ENCODE measurements at regions of chr3 and their contacts with region 1.

Region 1: DNA sequence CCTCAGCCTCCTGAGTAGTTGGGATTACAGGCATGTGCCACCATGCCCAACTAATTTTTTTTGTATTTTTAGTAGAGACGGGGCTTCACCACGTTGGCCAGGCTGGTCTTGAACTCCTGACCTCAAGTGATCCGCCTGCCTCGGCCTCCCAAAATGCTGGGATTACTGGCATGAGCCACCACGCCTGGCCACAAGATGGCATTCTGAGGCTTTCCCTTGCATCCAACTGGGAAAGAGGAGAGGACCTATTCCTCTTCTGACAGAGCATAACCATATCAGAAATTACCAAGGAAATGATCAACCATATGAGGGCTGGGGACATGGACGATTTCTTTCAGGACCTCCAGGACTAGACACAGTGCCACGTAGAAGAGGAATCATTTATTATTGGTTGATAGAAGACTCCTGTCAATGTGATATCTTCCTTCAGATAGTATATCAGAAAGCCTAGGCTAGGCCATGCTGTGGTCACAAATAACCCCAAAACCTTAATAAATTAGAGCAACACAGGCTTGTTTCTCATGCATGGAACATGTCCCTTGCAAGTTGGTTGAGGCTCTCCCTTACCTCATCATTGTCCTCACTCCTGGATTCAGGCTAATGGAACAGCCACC is 372.3 kb upstream of the IL12A start:
- DNase-seq: peak; percentile 68
- ATAC-seq: peak; percentile 70
- H3K4me3 ChIP-seq: no peak overlapping the region
- H3K27ac ChIP-seq: no peak overlapping the region
- H3K4me1 ChIP-seq: peaks cover 14% of the 10 kb centered on the region
- H3K27me3 ChIP-seq: no peaks in the 10 kb centered on the region
- CTCF ChIP-seq: peak; percentile 67
- POLR2A ChIP-seq: no peak
- RAD21 ChIP-seq: peak; percentile 82

Region 2: DNA sequence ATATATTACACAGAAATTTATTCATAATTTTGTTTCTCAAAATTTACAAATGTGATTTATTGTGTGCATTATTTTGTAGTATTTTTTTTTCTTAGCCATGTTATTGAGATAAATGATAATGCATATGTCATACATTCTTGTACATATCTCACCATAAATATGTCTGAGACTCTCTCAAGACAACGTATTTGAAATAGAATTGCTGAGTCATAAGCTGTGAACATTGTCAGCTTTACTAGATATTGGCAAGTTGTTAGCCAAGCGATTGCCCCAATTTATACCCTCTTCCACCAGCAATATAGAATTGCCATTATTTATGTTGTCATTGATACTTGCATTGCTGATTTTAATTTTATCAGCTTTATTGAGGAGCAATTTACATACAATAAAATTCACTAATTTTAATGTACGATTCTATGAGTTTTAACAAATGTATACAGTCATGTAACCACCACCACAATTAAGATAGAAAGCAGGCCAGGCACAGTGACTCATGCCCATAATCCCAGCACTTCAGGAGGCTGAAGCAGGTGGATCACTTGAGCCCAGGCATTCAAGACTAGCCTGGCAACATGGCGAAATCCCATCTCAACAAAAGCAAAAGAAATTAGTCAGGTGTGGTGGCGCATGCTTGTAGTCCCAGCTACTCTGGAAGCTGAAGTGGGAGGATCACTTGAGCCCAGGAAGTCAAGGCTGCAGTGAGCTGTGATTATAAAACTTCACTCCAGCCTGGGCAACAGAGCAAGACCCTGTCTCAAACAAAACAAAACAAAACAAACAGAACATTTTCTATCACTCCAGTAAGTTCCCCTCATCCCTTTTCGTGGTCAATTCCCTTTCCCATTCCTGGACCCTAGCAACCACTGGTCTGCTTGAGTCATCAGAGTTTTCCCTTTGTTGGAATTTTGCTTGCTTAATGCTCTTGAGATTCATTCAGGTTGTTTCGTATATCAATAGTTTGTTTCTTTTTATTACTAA is 441.3 kb before region 1 on chr3:
- CTCF ChIA-PET with region 1: no interaction called
- POLR2A ChIA-PET with region 1: no interaction called
- dilution Hi-C with region 1: no loop called
- in situ Hi-C with region 1: no loop called
- intact Hi-C with region 1: no loop called
- DNase-seq: no peak
- ATAC-seq: no peak
- H3K4me3 ChIP-seq: no peak overlapping the region
- H3K27ac ChIP-seq: no peak overlapping the region
- H3K4me1 ChIP-seq: no peaks in the 10 kb centered on the region
- H3K27me3 ChIP-seq: no peaks in the 10 kb centered on the region
- CTCF ChIP-seq: no peak
- POLR2A ChIP-seq: no peak
- RAD21 ChIP-seq: no peak

Region 3: GRCh38 chr3:159637883-159638542 is 21.7 kb after region 1 on chr3:
- CTCF ChIA-PET with region 1: no interaction called
- POLR2A ChIA-PET with region 1: no interaction called
- dilution Hi-C with region 1: no loop called
- in situ Hi-C with region 1: no loop called
- intact Hi-C with region 1: loop called (anchors 2 kb)
- DNase-seq: peak; percentile 79
- ATAC-seq: peak; percentile 89
- H3K4me3 ChIP-seq: no peak overlapping the region
- H3K27ac ChIP-seq: no peak overlapping the region
- H3K4me1 ChIP-seq: peaks cover 12% of the 10 kb centered on the region
- H3K27me3 ChIP-seq: no peaks in the 10 kb centered on the region; the same call in 1 of the 2 replicates
- CTCF ChIP-seq: no peak
- POLR2A ChIP-seq: no peak
- RAD21 ChIP-seq: no peak

Region 4: DNA sequence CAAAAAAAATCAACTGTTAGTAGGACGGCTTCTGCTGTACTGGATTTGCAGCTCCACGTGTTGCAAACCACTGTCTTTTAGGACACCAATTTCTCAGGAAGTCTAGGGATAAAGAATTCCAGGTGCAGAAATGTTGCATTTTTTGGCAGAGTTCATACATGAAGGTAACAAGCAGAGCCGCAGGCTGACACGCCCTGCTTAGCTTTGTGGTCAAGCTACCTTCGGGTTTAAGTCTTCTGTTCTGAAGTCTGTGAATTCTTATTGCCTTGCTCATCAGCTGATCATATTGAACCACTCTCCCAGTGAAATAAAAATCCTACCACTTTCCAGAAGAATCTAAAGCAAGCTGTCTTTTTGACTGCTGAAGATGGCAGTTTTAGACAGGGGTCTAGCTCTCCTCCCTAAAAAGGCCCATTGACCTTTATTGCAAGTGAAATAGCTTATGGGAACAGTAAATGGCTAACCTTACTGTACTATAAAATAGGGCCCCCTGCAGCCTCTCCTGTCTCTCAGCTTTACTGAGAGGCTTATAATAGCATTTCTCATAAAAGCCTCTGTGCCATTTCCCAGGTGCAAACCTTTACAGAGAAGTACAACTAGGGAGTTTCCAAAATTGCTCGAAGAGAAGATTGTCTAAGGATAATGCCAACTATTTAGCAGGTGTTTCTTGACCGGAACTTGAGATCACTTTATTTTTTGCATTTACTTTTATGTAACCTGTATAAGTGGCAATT is 110.1 kb after region 1 on chr3:
- CTCF ChIA-PET with region 1: no interaction called
- POLR2A ChIA-PET with region 1: no interaction called
- dilution Hi-C with region 1: no loop called
- in situ Hi-C with region 1: no loop called
- intact Hi-C with region 1: loop called (anchors 1 kb)
- DNase-seq: peak; percentile 42
- ATAC-seq: peak; percentile 29; the same call in 1 of the 2 replicates
- H3K4me3 ChIP-seq: no peak overlapping the region
- H3K27ac ChIP-seq: no peak overlapping the region
- H3K4me1 ChIP-seq: peaks cover 5% of the 10 kb centered on the region
- H3K27me3 ChIP-seq: no peaks in the 10 kb centered on the region
- CTCF ChIP-seq: no peak
- POLR2A ChIP-seq: no peak
- RAD21 ChIP-seq: no peak

Region 5: DNA sequence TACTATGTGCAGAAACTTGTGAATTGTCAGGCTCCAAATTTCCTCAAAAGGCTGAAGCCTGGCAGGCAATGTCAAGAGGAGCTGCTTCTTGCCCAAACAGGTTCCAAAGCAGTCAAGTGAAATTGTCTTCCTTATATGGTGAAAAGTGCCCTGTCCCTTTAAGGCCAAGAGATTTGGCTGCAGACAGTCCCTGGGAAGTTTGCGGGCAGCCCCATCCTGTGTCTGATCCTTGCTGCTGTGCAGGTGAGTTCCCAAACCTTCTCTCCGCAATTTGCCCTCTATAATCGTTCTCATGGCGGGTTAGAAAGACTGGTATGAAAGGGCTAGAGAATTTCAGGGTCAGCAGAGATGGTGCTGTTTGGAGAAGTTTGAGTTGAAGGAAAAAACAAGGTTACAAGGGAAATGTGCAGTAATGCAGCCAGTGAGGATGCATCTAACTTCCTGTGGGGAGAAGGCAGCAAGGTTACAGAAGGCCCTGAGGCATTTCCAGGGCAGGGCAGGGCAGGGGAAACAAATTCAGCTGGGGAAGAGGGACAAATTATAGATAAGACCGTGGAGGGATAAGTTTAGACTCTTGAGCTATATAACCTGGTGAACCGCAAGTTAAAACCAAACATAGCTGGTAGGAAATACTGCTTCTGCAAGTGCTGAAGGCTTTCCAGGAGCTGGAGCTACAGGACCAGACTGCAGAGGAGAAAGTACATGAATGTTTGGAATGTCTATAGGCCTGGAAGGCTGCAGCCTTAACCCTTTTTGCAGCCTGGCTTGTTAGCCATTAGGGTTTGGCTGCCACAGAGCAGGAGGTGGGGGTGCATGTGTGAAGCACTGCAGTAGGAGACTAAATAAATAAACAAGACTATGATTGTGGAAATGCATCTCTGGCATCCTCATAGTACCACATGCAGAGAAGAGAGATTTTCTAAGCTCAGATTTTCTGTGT is 116.1 kb after region 1 on chr3:
- CTCF ChIA-PET with region 1: no interaction called
- POLR2A ChIA-PET with region 1: no interaction called
- dilution Hi-C with region 1: no loop called
- in situ Hi-C with region 1: no loop called
- intact Hi-C with region 1: loop called (anchors 2 kb)
- DNase-seq: peak; percentile 86
- ATAC-seq: peak; percentile 82
- H3K4me3 ChIP-seq: peak overlapping the region; percentile 41; the same call in 1 of the 2 replicates
- H3K27ac ChIP-seq: peak overlapping the region; percentile 82
- H3K4me1 ChIP-seq: peaks cover 15% of the 10 kb centered on the region
- H3K27me3 ChIP-seq: no peaks in the 10 kb centered on the region
- CTCF ChIP-seq: no peak
- POLR2A ChIP-seq: no peak; the same call in 1 of the 2 replicates
- RAD21 ChIP-seq: peak; percentile 13; the same call in 1 of the 2 replicates

Measured in IMR-90 (cell line).